ENCODE measurements at regions of chr7 and their contacts with region 1.

Region 1: GRCh38 chr7:155598810-155599210 is 45.7 kb upstream of the RBM33 start:
- DNase-seq: no peak
- H3K4me3 ChIP-seq: no peak overlapping the region
- H3K27me3 ChIP-seq: peaks cover 4% of the 10 kb centered on the region
- CTCF ChIP-seq: peak; percentile 98

Region 2: GRCh38 chr7:155611808-155612447 is 13.1 kb after region 1 on chr7:
- CTCF ChIA-PET with region 1: interaction called, 19 read pairs
- POLR2A ChIA-PET with region 1: no interaction called
- DNase-seq: no peak
- H3K4me3 ChIP-seq: no peak overlapping the region
- H3K27me3 ChIP-seq: no peaks in the 10 kb centered on the region
- CTCF ChIP-seq: no peak

Region 3: GRCh38 chr7:155702616-155703015 is 103.8 kb after region 1 on chr7:
- CTCF ChIA-PET with region 1: interaction called, 11 read pairs
- POLR2A ChIA-PET with region 1: no interaction called
- DNase-seq: no peak
- H3K4me3 ChIP-seq: no peak overlapping the region
- H3K27me3 ChIP-seq: no peaks in the 10 kb centered on the region
- CTCF ChIP-seq: no peak

Region 4: DNA sequence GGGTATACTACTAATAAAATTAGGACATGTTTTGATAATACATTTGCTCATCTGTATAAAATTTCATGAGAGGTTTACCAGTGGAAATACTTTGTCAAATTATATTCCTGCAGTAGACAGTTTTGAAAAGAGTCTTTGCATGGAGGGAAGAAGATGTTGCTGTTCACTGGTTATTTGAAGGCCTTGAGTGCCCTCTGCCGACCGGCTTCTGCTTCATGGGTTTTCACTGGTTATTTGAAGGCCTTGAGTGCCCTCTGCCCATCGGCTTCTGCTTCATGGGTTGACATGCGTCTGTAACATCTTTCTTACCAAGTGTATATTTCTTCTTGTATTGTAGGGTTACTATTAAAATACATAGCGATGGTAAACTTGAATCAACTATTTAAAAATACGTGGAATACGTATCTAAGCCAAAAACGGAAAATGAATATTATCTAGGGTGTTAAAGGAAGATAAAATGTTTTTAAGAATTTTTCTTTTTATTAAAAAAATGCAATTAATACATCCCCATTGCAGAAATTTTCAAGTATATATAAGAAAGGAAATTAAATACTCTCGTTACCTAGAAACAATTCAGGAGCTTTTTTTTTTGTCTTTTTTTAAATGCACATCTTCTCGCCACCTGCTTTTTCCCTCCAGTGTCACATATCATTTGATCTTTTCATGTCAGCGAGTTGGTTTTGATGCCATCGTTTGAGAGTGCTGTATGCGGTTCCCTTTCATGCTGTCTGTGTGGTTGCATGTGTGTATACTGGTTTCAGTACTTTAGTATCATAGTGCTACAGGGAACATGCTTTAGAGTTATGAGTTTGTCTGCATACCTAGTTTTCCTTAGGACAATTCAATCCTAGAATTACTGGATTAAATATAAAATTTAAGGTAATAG is 140.1 kb after region 1 on chr7:
- CTCF ChIA-PET with region 1: interaction called, 104 read pairs
- POLR2A ChIA-PET with region 1: no interaction called
- DNase-seq: peak; percentile 17
- H3K4me3 ChIP-seq: no peak overlapping the region
- H3K27me3 ChIP-seq: no peaks in the 10 kb centered on the region
- CTCF ChIP-seq: peak; percentile 75

Region 5: GRCh38 chr7:155769701-155770100 is 170.9 kb after region 1 on chr7:
- CTCF ChIA-PET with region 1: interaction called, 40 read pairs
- POLR2A ChIA-PET with region 1: no interaction called
- DNase-seq: peak; percentile 66
- H3K4me3 ChIP-seq: no peak overlapping the region
- H3K27me3 ChIP-seq: no peaks in the 10 kb centered on the region
- CTCF ChIP-seq: no peak

Measured in BJ (cell line).